ENCODE measurements at regions of chr11 and their contacts with region 1.

Region 1: GRCh38 chr11:48109046-48109666 is 107.5 kb upstream of the OR4B1 start:
- DNase-seq: no peak
- H3K4me3 Mint-ChIP-seq: no peak overlapping the region
- H3K27ac Mint-ChIP-seq: peak overlapping the region; percentile 75
- H3K4me1 Mint-ChIP-seq: peaks cover 46% of the 10 kb centered on the region
- H3K27me3 Mint-ChIP-seq: no peaks in the 10 kb centered on the region

Region 2: DNA sequence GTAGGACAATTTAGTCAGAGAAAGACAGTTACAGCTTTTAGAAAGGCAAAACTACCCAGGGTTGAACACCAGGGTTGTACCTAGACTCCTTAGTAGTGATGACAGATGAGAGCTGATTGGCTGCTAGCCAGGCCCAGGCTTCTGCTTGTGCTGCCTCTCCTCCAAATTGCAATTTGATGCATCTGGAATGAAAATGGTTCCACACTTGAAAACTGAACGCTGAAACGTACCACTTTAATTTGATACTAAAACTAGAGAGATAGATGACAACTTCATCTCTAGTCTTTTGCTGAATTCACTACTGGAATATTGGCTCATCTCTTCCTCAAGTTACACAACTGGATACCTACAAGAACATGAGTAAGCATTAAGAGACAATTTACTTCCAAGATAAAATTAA is 322.8 kb before region 1 on chr11:
- CTCF ChIA-PET with region 1: no interaction called
- intact Hi-C with region 1: no loop called
- DNase-seq: no peak
- H3K4me3 Mint-ChIP-seq: no peak overlapping the region
- H3K27ac Mint-ChIP-seq: no peak overlapping the region
- H3K4me1 Mint-ChIP-seq: no peaks in the 10 kb centered on the region
- H3K27me3 Mint-ChIP-seq: no peaks in the 10 kb centered on the region

Region 3: DNA sequence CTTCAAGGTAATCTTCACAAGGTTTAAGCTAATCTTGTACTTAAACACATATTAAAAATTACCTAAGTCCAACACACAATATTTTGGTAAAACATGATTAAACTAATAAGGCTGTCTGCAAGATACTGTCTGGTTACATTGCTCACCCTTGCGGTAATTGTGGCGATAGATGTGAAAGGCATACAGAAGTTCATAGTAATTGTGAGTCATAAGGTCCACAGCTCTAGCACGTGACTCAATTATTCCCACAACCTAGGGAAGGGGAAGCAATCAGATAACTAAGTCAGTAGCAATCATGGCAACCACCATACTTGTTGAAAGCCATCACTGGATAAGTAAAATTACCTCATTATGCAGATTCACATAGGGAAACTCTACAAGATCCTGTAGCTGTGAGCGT is 311.5 kb before region 1 on chr11:
- CTCF ChIA-PET with region 1: no interaction called
- intact Hi-C with region 1: loop called (anchors 1 kb)
- DNase-seq: peak; percentile 80
- H3K4me3 Mint-ChIP-seq: no peak overlapping the region
- H3K27ac Mint-ChIP-seq: peak overlapping the region; percentile 84
- H3K4me1 Mint-ChIP-seq: peaks cover 12% of the 10 kb centered on the region
- H3K27me3 Mint-ChIP-seq: no peaks in the 10 kb centered on the region

Region 4: GRCh38 chr11:47928426-47928825 is 180.7 kb before region 1 on chr11:
- CTCF ChIA-PET with region 1: interaction called, 194 read pairs
- intact Hi-C with region 1: no loop called
- DNase-seq: no peak
- H3K4me3 Mint-ChIP-seq: no peak overlapping the region
- H3K27ac Mint-ChIP-seq: no peak overlapping the region
- H3K4me1 Mint-ChIP-seq: peaks cover 28% of the 10 kb centered on the region
- H3K27me3 Mint-ChIP-seq: no peaks in the 10 kb centered on the region

Region 5: DNA sequence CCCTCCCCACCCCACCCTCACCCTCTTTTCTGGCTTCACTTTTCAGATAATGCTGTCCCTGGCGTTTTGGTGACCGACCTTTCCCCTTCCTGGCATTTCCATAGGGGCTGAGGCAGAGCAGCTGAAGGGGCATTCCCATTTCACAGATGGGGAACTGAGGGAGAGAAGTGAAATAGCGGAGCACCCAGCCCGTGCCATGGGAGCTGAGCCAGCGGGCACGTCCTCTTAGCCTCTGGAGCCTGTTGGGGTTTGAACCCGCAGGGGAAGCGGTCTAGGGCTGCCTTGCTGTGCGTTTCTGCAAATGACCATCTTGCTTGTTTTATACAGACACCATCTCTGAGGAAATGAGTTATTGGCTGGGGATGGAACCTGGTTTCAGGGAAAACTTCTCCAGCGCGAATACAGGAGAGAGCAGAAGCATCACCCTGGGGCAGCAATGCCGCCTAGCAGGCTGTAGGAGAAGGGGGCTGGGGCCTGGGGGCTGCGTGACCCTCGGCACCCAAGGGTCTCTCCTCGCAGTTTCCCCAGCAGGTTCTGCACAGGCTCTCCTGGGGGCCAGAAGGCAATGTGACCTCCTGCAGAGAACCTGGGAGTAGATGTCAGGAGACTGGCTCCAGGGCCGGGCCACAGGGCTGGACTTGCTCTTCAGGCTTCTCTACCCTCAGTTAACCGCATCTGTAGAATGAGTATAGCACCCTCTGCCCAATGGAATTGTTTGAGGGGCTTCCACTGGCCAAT is 127.3 kb before region 1 on chr11:
- CTCF ChIA-PET with region 1: interaction called, 16 read pairs
- intact Hi-C with region 1: loop called (anchors 1 kb)
- DNase-seq: peak; percentile 38
- H3K4me3 Mint-ChIP-seq: peak overlapping the region; percentile 82
- H3K27ac Mint-ChIP-seq: peak overlapping the region; percentile 42
- H3K4me1 Mint-ChIP-seq: peaks cover 39% of the 10 kb centered on the region
- H3K27me3 Mint-ChIP-seq: peaks cover 3% of the 10 kb centered on the region

Measured in activated naive CD4-positive, alpha-beta T cell treated with anti-CD3 and anti-CD28 coated beads for 36 hours (primary cell).